Activated T-helper 2 cell treated with anti-CD3 and anti-CD28 coated beads, Interferon-gamma antibody, Interleukin-2, Interleukin-4, amounts not matched to agents 10 μg/mL and 5 μg/mL and 100 μg/mL, durations not matched to agents 14 hours and 24 hours and 36 hours (primary cell): ENCODE measurements at regions of chr7 and their contacts with region 1.

Region 1: DNA sequence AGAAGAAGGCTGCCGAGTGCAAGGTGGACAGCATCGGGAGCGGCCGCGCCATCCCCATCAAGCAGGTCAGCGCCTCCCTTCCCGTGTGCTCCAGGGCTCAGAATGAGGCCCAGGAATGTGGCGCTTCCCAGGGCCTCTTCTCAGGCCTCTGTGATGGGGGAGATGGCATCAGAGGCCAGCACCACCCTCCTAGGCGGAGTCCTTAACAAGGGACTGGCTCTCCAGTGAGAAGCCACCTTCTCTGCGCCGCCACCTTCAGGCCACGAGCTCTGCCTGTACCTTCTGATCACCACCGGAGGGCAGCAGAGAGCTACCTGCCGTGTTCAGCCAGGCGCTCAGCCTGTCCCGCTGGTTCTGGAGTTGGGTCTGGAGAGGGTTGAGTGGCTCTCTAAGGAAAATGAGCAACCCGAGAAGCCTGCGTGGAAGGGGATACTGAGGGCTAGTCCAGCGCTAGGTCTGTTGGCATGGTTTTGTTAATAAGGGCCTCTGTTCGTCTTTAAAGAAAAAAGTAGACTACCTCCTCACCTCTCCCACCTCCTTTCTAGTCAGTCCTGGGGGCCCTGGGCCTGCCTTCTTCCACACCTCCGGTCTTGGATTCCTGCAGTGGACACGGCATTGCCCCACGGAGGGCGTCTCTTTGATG is 37.7 kb downstream of the AGAP3 start:
- DNase-seq: peak; percentile 71
- H3K4me3 Mint-ChIP-seq: no peak overlapping the region
- H3K27ac Mint-ChIP-seq: no peak overlapping the region
- H3K4me1 Mint-ChIP-seq: no peaks in the 10 kb centered on the region
- H3K27me3 Mint-ChIP-seq: no peaks in the 10 kb centered on the region

Region 2: DNA sequence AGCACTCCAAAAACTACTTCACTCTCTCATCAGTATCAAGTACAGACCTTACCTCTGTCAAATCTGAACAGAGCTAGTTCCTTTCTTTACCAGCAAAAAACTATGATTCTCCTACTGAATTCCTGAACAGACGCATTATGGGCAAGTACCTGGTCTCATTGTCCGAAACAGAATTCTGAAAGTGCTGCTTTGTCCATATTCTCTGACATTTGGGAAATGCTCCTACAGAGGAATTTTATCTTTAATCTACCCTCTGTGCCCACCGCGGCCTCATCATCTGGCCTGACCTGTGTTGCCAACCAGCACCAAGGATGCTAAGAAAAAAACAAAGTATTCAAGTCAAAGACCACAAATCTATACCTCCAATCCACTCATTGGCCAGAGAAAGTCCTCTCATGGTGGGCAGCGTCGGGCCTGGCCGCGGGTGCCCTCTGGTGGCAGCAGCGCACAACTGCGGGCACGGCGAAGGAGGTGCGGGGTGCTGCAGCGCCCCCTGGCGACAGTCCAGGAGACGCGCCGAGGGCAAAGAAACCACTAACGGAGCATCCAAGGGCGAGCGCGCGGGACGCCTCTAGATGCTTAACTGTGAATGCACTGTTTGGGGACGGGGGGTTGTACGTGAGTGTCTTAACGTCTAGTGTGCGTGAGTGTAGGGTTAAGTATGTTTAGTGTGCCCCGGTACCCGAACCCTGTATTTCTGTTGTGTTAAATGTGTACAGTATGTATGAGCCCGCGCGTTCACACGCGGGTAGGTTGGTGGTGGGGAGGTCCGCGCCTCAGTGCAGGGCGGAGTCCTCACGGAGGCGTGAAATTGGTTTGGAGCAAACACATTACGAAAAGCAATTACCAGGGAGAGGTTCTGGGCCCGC is 48.6 kb after region 1 on chr7:
- intact Hi-C with region 1: loop called (anchors 1 kb)
- DNase-seq: peak; percentile 72
- H3K4me3 Mint-ChIP-seq: no peak overlapping the region
- H3K27ac Mint-ChIP-seq: no peak overlapping the region
- H3K4me1 Mint-ChIP-seq: peaks cover 9% of the 10 kb centered on the region
- H3K27me3 Mint-ChIP-seq: peaks cover 47% of the 10 kb centered on the region

Region 3: DNA sequence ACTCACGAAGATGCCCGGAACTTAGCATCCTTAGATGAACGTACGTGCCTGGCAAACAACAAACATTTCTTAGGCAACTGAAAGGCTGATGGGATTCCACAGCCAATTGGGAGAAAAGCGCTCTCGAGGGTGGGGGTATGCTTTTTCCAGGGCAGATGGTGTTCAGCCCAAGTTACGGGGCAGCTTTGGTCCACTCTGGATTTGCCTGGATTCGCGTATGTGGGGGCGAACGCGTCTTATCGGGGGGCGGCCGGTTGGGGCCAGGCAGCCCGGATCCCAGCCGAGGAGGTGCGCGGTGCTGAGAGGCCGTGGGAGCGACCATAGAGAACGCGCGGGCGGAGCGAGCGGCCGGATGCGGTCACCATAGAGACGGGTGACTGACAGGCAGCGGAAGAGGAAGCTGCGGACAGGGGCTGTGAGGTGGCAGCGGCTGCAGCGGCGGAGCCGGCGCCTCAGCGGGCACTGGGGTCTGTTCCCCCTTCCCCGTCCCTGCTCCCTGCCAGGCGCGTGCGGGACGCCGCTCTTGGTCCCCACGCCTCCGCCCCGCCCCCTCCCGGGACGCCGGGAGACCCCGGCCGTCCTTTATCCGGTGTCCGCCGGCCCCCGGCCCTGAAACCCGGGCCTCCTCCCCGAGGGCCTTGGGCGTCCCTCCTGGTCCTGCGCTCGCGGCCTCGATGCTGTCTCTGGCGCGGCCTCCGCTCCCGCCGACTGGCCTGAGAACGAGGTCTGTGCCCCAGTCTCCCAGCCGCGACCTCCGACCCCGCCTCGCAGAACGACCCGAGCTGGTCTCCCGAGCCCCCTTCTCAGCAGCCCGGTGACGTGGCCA is 108.4 kb after region 1 on chr7 and contains the start of gene CHPF2:
- intact Hi-C with region 1: loop called (anchors 5 kb)
- DNase-seq: peak; percentile 89
- H3K4me3 Mint-ChIP-seq: peak within 1 kb of the TSS; percentile 100
- H3K27ac Mint-ChIP-seq: peak within 1 kb of the TSS; percentile 99
- H3K4me1 Mint-ChIP-seq: peaks cover 23% of the 10 kb centered on the region
- H3K27me3 Mint-ChIP-seq: peaks cover 4% of the 10 kb centered on the region
- total RNA-seq, gene CHPF2: 43.8 and 46.0 TPM in 2 replicates